HEK293T (cell line): ENCODE measurements at regions of chr2 and their contacts with region 1.

Region 1: GRCh38 chr2:171433763-171434670 is at the starts of genes DCAF17 and METTL8:
- DNase-seq: peak; percentile 94

Region 2: DNA sequence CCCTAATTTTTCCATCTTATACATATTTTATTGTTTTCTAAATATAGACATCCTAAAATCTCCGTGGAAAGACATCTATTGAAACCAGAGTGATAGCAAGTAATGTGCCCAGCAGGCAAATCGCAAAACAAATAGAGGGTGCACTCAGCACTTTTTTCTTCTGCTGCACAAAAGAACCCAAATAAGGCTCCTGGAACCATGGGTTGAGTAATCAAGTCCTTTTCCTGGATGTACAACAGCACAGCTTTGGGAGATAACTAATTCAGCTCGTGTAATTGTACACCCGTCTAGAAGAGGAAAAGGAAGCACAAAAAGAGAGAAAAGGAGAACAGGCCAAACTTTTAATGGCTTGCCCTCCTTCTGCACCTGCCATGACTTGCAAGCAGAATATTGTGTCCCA is 146.4 kb before region 1 on chr2:
- CTCF ChIA-PET with region 1: no interaction called
- POLR2A ChIA-PET with region 1: no interaction called
- DNase-seq: no peak

Region 3: GRCh38 chr2:171447675-171448074 is 13.7 kb after region 1 on chr2:
- CTCF ChIA-PET with region 1: no interaction called
- POLR2A ChIA-PET with region 1: no interaction called
- DNase-seq: no peak

Region 4: GRCh38 chr2:171522052-171522787 is 88.2 kb after region 1 on chr2 and contains the start of gene CYBRD1:
- CTCF ChIA-PET with region 1: no interaction called
- POLR2A ChIA-PET with region 1: interaction called, 21 read pairs
- DNase-seq: peak; percentile 25